ENCODE measurements at regions of chr10 and their contacts with region 1.

Region 1: DNA sequence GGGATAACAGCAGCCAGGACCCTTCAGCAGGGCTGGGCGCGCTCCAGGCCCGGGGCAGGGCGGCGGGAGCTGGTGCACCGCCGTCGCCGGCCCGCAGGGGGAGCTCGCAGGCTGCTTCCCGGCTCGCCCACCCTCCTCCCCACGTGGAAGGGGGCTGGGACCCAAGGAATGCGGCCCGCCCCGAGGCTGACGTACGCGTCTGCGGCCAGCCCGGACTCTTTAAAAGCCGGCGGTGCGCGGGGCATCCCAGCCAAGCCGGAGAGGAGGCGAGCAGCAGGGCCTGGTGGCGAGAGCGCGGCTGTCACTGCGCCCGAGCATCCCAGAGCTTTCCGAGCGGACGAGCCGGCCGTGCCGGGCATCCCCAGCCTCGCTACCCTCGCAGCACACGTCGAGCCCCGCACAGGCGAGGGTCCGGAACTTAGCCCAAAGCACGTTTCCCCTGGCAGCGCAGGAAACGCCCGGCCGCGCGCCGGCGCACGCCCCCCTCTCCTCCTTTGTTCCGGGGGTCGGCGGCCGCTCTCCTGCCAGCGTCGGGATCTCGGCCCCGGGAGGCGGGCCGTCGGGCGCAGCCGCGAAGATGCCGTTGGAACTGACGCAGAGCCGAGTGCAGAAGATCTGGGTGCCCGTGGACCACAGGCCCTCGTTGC is at the start of gene PFKFB3:
- DNase-seq: peak in 1 of 2 donors; percentile 93
- H3K4me3 ChIP-seq: peak within 1 kb of the TSS; percentile 91 to 98
- H3K27ac ChIP-seq: peak within 1 kb of the TSS; percentile 97
- H3K4me1 ChIP-seq: peaks cover 38% of the 10 kb centered on the region
- H3K27me3 ChIP-seq: no peaks in the 10 kb centered on the region
- CTCF ChIP-seq: peak; percentile 79 to 100 (median 93)
- POLR2A ChIP-seq: peak; percentile 77 to 99
- total RNA-seq, gene PFKFB3: 43.2 TPM

Region 2: GRCh38 chr10:6088721-6089390 is 114.0 kb before region 1 on chr10 and contains the start of gene RBM17:
- intact Hi-C with region 1: loop called (anchors 5 kb)
- DNase-seq: peak in 1 of 2 donors; percentile 96
- H3K4me3 ChIP-seq: peak within 1 kb of the TSS; percentile 87 to 93
- H3K27ac ChIP-seq: peak within 1 kb of the TSS; percentile 78
- H3K4me1 ChIP-seq: peaks cover 55% of the 10 kb centered on the region
- H3K27me3 ChIP-seq: no peaks in the 10 kb centered on the region
- CTCF ChIP-seq: peak; percentile 98 to 100 (median 100)
- POLR2A ChIP-seq: peak in 1 of 2 donors; percentile 72
- total RNA-seq, gene RBM17: 50.6 TPM

Region 3: GRCh38 chr10:6114805-6115341 is 87.9 kb before region 1 on chr10:
- intact Hi-C with region 1: loop called (anchors 10 kb)
- DNase-seq: no peak
- H3K4me3 ChIP-seq: no peak overlapping the region
- H3K27ac ChIP-seq: peak overlapping the region; percentile 7
- H3K4me1 ChIP-seq: peaks cover 19% of the 10 kb centered on the region
- H3K27me3 ChIP-seq: no peaks in the 10 kb centered on the region
- CTCF ChIP-seq: no peak
- POLR2A ChIP-seq: no peak

Region 4: DNA sequence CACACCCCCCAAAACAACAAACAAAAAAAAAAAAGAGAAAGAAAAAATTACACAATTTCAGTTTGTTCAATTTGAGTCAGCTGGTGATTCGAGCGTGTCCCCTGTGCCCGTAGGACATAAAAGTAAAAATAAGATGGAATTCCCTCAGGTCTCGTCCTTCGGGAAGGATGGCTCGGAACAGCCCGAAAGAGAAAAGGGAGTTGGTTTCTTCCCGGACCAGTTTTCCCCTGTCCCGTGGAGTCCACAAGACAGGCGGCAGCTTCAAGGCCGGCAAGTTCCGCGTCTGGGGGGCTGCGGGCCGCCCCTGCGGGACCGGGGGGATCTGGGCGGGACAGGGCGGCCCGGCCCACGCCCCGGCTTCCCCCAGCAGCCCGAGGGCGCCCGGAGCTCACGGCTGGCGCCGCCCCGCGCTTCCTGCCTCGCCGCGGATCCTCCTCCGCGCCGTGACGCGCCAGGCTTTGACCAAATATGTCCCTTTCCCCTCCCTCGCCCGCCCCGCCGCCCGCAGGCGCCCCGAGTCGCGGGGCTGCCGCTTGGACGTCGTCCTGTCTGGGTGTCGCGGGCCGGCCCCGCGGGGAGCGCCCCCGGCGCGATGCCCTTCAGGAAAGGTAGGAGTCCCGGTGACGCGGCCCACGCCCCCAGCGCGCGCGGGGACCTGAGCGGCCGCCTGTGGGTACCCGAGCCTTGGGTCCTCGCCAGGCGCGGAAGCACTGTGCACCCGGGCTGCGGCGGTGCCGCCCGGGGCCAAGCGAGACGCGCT is 58.2 kb before region 1 on chr10:
- intact Hi-C with region 1: loop called (anchors 5 kb)
- DNase-seq: no peak
- H3K4me3 ChIP-seq: peak overlapping the region; percentile 69 to 95
- H3K27ac ChIP-seq: peak overlapping the region; percentile 72
- H3K4me1 ChIP-seq: peaks cover 43% of the 10 kb centered on the region
- H3K27me3 ChIP-seq: no peaks in the 10 kb centered on the region
- CTCF ChIP-seq: no peak
- POLR2A ChIP-seq: peak in 1 of 2 donors; percentile 72

Region 5: DNA sequence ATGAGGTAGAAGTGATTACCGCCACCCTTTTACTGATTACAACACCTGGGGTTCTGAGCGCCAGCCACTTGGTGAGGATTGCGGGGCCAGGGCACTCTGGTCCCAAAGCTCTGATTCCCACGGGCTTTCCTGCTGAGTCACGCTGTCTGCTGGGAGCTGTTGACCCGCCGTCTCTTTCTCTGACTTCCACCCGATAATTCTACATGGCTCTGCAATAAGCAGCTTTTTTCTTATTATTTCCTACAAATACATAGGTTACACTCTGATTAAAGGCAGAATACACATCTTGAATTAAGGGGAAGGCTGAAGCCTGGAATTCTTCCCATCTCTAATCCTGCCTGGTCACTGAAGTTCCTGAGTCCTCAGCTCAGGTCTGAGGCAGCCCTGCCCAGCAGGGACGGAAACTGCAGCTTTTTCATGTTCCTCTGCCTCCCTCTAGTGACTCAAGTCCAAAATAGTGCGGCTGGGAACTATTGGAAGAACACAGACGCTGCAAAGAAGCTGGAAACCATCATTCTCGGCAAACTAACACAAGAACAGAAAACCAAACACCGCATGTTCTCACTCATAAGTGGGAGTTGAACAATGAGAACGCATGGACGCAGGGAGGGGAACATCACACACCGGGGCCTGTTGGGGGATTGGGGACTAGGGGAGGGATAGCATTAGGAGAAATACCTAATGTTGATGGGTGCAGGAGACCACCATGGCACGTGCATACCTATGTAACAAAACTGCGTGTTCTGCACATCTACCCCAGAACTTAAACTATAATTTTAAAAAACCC is 198.9 kb after region 1 on chr10:
- intact Hi-C with region 1: loop called (anchors 1 kb)
- DNase-seq: no peak
- H3K4me3 ChIP-seq: peak overlapping the region; percentile 30 to 33
- H3K27ac ChIP-seq: peak overlapping the region; percentile 42
- H3K4me1 ChIP-seq: peaks cover 6% of the 10 kb centered on the region
- H3K27me3 ChIP-seq: no peaks in the 10 kb centered on the region
- CTCF ChIP-seq: peak; percentile 67 to 86 (median 69)
- POLR2A ChIP-seq: no peak